Esophagus squamous epithelium (tissue), 5 donors: ENCODE measurements at regions of chr9 and their contacts with region 1.

Region 1: GRCh38 chr9:118896324-118897000 is 472.8 kb downstream of the BRINP1 start:
- DNase-seq: no peak
- H3K4me3 ChIP-seq: no peak overlapping the region
- H3K27ac ChIP-seq: no peak overlapping the region
- H3K4me1 ChIP-seq: no peaks in the 10 kb centered on the region
- H3K27me3 ChIP-seq: no peaks in the 10 kb centered on the region
- CTCF ChIP-seq: no peak
- POLR2A ChIP-seq: no peak

Region 2: DNA sequence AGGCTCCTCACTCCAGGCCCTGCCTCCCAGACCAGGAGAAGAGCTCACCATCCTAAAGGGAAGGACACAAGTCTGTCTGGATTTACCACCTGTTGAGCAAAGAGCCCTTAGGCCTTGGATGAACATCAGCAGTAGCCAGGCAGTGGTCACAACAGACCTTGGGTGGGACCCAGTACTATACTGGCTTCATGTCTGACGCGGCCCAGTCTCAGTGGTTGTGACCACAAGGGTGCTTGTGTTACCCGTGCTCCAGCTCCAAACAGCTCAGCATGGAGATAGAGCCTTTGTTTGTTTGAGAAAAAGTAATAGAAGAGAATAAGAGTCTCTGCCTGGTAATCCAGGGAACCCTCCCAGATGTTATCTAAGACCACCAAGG is 144.6 kb before region 1 on chr9:
- intact Hi-C with region 1: no loop called
- DNase-seq: no peak
- H3K4me3 ChIP-seq: no peak overlapping the region
- H3K27ac ChIP-seq: no peak overlapping the region
- H3K4me1 ChIP-seq: no peaks in the 10 kb centered on the region
- H3K27me3 ChIP-seq: no peaks in the 10 kb centered on the region
- CTCF ChIP-seq: no peak
- POLR2A ChIP-seq: no peak

Region 3: DNA sequence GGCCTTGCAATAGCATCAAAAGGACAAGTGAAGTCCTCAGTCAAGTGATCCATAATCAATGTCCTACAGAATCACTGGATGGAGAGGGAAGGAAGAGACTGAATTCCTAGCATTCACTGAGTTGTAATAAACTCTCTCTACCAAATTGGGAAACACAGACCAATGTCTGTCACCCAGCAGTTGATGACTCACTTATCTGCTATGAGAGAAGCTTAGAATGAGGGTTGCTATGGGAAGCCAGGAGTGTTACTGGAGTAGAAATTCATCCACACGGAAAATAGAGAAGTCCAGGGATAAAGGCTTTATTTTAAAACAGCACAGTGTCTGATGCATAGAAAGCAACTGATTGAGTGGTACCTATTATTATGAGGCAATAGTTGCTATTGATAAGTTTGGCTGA is 65.4 kb after region 1 on chr9:
- intact Hi-C with region 1: loop called (anchors 10 kb)
- DNase-seq: no peak
- H3K4me3 ChIP-seq: no peak overlapping the region
- H3K27ac ChIP-seq: no peak overlapping the region
- H3K4me1 ChIP-seq: no peaks in the 10 kb centered on the region
- H3K27me3 ChIP-seq: no peaks in the 10 kb centered on the region
- CTCF ChIP-seq: no peak
- POLR2A ChIP-seq: no peak